Activated CD4-positive, alpha-beta T cell treated with anti-CD3 and anti-CD28 coated beads, Interleukin-2, amount 10 ng/mL, durations not matched to agents 7 days and 5 days (primary cell): ENCODE measurements at regions of chr12 and their contacts with region 1.

Region 1: GRCh38 chr12:27014085-27014858 is at the start of gene TM7SF3:
- DNase-seq: peak; percentile 96
- H3K4me3 Mint-ChIP-seq: peak within 1 kb of the TSS; percentile 94
- H3K27ac Mint-ChIP-seq: peak within 1 kb of the TSS; percentile 98
- H3K4me1 Mint-ChIP-seq: peaks cover 59% of the 10 kb centered on the region
- H3K27me3 Mint-ChIP-seq: no peaks in the 10 kb centered on the region
- total RNA-seq, gene TM7SF3: 46.1 to 58.8 TPM

Region 2: DNA sequence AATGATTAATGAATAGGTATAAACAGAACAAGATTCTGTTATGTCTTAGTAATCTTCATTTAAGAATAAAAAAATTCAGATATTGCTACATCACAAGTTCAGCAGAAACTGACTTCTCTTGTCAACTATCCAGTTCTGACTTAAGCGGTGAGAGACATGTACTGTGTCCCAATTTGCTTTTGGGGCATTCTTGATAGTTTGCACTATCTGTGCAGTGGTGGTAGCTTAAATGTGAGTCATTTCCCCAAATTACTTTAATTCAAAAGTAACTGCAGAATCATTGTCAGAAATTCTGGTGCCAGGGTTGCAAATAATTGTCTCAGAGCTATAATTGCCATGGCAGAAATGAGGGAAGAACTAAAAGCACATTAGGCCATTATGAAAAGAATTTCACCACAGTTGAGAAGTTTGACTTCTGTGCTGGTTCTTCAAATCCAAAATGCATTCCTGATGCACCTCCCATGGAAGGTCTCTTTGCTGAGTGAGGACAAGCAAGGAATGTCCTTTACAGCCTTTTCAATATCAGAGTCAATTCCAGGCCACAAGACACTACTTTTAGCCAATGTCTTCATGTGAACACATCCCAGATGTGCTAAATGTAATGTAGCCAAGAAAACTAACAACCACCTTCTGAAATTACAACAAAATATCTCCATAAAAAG is 514.2 kb before region 1 on chr12:
- CTCF ChIA-PET with region 1: no interaction called
- POLR2A ChIA-PET with region 1: no interaction called
- DNase-seq: no peak
- H3K4me3 Mint-ChIP-seq: no peak overlapping the region
- H3K27ac Mint-ChIP-seq: no peak overlapping the region
- H3K4me1 Mint-ChIP-seq: no peaks in the 10 kb centered on the region
- H3K27me3 Mint-ChIP-seq: no peaks in the 10 kb centered on the region

Region 3: DNA sequence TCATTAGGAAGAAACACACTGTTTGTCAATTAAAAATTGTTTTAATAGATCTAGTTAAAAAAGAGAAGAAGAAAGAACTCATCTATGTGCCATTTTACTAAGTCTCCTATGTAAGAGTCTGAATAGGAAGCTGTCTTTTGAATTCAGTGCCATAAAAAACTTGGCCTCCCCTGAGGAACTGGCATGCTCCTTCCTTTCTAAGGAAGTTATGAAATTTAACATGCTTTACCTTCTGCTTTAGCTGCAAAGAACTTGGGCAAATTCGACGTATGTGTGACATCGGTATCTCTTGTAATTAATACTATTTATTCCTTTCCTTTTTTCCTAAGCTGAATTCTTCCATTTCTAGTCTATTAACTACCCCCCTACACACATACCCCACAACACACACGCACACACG is 12.6 kb before region 1 on chr12:
- CTCF ChIA-PET with region 1: interaction called, 10 read pairs
- POLR2A ChIA-PET with region 1: no interaction called
- DNase-seq: no peak
- H3K4me3 Mint-ChIP-seq: no peak overlapping the region
- H3K27ac Mint-ChIP-seq: no peak overlapping the region
- H3K4me1 Mint-ChIP-seq: peaks cover 26% of the 10 kb centered on the region
- H3K27me3 Mint-ChIP-seq: no peaks in the 10 kb centered on the region

Region 4: GRCh38 chr12:27024291-27024690 is 10.0 kb after region 1 on chr12:
- CTCF ChIA-PET with region 1: interaction called, 11 read pairs
- POLR2A ChIA-PET with region 1: no interaction called
- DNase-seq: no peak
- H3K4me3 Mint-ChIP-seq: no peak overlapping the region
- H3K27ac Mint-ChIP-seq: no peak overlapping the region
- H3K4me1 Mint-ChIP-seq: peaks cover 36% of the 10 kb centered on the region
- H3K27me3 Mint-ChIP-seq: peaks cover 5% of the 10 kb centered on the region

Region 5: GRCh38 chr12:27048822-27049752 is 34.8 kb after region 1 on chr12:
- CTCF ChIA-PET with region 1: no interaction called
- POLR2A ChIA-PET with region 1: no interaction called
- DNase-seq: no peak
- H3K4me3 Mint-ChIP-seq: no peak overlapping the region
- H3K27ac Mint-ChIP-seq: no peak overlapping the region
- H3K4me1 Mint-ChIP-seq: peaks cover 2% of the 10 kb centered on the region
- H3K27me3 Mint-ChIP-seq: no peaks in the 10 kb centered on the region

Region 6: DNA sequence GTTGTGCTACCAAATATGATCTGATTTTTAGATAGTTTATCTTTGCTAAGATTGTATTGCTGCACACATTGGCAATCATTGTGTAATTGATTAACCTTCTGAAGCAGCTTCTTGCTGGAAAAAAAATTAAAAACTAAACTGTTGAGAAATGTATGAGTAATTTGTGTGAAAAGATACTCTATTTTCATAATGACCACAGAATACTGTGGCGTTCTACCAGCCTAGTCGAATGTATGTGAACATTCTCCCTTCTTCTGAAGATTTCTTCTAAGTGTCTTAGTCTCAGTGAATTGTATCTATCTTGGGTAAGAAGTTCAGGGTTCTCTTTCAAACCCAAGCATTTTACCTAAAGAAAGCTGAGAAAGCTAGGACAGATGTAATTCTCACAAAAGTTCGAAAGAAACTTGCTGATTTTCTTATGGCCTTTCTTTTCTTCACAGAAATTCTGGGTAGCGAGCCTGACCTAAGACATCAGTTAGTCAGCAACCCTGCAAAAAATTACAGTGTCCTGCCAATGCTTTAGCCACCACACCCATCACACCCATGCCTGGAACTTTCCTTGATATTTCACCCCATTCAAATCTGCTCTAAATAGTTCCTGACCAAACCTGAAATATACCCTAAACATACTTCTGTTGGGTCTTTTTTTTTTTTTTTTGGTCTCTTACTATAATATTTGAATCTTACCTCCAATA is 95.2 kb after region 1 on chr12:
- CTCF ChIA-PET with region 1: no interaction called
- POLR2A ChIA-PET with region 1: interaction called, 13 read pairs
- DNase-seq: no peak
- H3K4me3 Mint-ChIP-seq: no peak overlapping the region
- H3K27ac Mint-ChIP-seq: no peak overlapping the region
- H3K4me1 Mint-ChIP-seq: peaks cover 20% of the 10 kb centered on the region
- H3K27me3 Mint-ChIP-seq: no peaks in the 10 kb centered on the region

Region 7: GRCh38 chr12:27305673-27306456 is 291.6 kb after region 1 on chr12:
- CTCF ChIA-PET with region 1: interaction called, 31 read pairs
- POLR2A ChIA-PET with region 1: no interaction called
- DNase-seq: no peak
- H3K4me3 Mint-ChIP-seq: no peak overlapping the region
- H3K27ac Mint-ChIP-seq: no peak overlapping the region
- H3K4me1 Mint-ChIP-seq: peaks cover 17% of the 10 kb centered on the region
- H3K27me3 Mint-ChIP-seq: no peaks in the 10 kb centered on the region